CD4-positive, alpha-beta memory T cell (primary cell): ENCODE measurements at regions of chr7 and their contacts with region 1.

Region 1: GRCh38 chr7:44847508-44847920 is 373 bp downstream of the H2AZ2 start:
- DNase-seq: peak; percentile 91 to 93 (median 92)
- H3K4me3 ChIP-seq: peak overlapping the region; percentile 49 to 62
- H3K4me3 Mint-ChIP-seq: peak overlapping the region; percentile 87 to 98 (median 96)
- H3K27ac ChIP-seq: peak overlapping the region; percentile 90
- H3K27ac Mint-ChIP-seq: peak overlapping the region; percentile 97 to 100 (median 100)
- H3K4me1 ChIP-seq: peaks cover 29% of the 10 kb centered on the region
- H3K4me1 Mint-ChIP-seq: peaks cover 18 to 46% (median 25%) of the 10 kb centered on the region in 4 donors
- H3K27me3 ChIP-seq: no peaks in the 10 kb centered on the region
- H3K27me3 Mint-ChIP-seq: peaks cover 0 to 1% of the 10 kb centered on the region in 2 donors

Region 2: DNA sequence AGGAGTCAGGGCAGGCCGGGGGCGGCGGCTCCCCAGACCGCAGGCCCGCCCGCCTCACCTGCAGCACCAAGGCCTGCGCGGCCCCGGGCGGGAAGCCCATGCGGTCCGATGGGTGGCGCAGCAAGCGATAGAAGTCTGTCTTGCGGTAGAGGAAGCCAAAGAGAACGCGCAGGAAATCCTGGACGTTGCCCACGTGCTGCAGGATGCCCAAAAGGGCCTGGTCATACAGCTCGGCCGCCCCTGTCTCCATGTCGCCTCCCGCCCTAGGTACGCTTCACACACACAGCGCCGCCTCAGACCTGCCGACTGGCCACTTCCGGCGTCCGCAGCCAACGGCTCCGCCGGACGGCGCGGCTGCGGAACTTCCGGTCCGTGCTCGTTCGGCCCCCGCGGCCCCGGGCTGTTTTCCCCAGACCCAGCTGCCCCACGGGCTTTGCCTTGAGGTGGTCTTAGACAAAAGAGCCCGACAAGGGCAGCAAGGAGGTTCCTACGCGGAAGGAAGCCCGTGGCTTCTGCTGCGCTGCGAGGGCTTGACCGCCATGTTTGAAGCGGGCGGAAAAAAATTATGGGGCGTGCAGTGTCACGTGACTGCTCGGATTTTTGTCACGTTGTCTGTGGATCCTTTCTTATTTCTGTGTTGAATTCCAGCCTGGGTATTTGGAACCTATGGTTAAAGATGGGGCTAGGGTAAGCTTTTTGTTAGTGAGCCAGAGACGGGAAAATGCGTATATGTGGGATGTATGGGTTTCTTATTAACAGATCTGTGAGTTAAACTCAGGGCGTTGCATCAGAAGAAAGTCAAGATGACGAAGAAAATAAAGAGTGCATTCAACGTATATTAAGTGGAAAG is 356.9 kb before region 1 on chr7 and contains the start of gene NUDCD3:
- CTCF ChIA-PET with region 1: interaction called, 4 read pairs
- POLR2A ChIA-PET with region 1: interaction called, 15 read pairs
- intact Hi-C with region 1: loop called (anchors 1 kb)
- DNase-seq: peak; percentile 81 to 84 (median 83)
- H3K4me3 ChIP-seq: peak within 1 kb of the TSS; percentile 90 to 96
- H3K4me3 Mint-ChIP-seq: peak within 1 kb of the TSS; percentile 84 to 99 (median 93)
- H3K27ac ChIP-seq: peak within 1 kb of the TSS; percentile 93
- H3K27ac Mint-ChIP-seq: peak within 1 kb of the TSS; percentile 77 to 98 (median 96)
- H3K4me1 ChIP-seq: peaks cover 44% of the 10 kb centered on the region
- H3K4me1 Mint-ChIP-seq: peaks cover 37 to 52% (median 42%) of the 10 kb centered on the region in 4 donors
- H3K27me3 ChIP-seq: no peaks in the 10 kb centered on the region
- H3K27me3 Mint-ChIP-seq: no peaks in the 10 kb centered on the region
- total RNA-seq, gene NUDCD3: 100 to 108 TPM

Region 3: GRCh38 chr7:44587843-44588711 is 259.4 kb before region 1 on chr7:
- CTCF ChIA-PET with region 1: interaction called, 34 read pairs
- POLR2A ChIA-PET with region 1: interaction called, 50 read pairs
- intact Hi-C with region 1: loop called (anchors 1 kb)
- DNase-seq: peak; percentile 65 to 73 (median 71)
- H3K4me3 ChIP-seq: no peak overlapping the region
- H3K4me3 Mint-ChIP-seq: no peak overlapping the region
- H3K27ac ChIP-seq: no peak overlapping the region
- H3K27ac Mint-ChIP-seq: peak overlapping the region in 5 of 7 donors; percentile 42 to 86 (median 68)
- H3K4me1 ChIP-seq: peaks cover 2% of the 10 kb centered on the region
- H3K4me1 Mint-ChIP-seq: peaks cover 5 to 16% (median 9%) of the 10 kb centered on the region in 4 donors
- H3K27me3 ChIP-seq: no peaks in the 10 kb centered on the region
- H3K27me3 Mint-ChIP-seq: no peaks in the 10 kb centered on the region

Region 4: GRCh38 chr7:44700322-44700721 is 147.2 kb before region 1 on chr7:
- CTCF ChIA-PET with region 1: no interaction called
- POLR2A ChIA-PET with region 1: no interaction called
- intact Hi-C with region 1: loop called (anchors 5 kb)
- DNase-seq: no peak
- H3K4me3 ChIP-seq: no peak overlapping the region
- H3K4me3 Mint-ChIP-seq: no peak overlapping the region
- H3K27ac ChIP-seq: no peak overlapping the region
- H3K27ac Mint-ChIP-seq: peak overlapping the region in 2 of 7 donors; percentile 17 to 72
- H3K4me1 ChIP-seq: no peaks in the 10 kb centered on the region
- H3K4me1 Mint-ChIP-seq: no peaks in the 10 kb centered on the region
- H3K27me3 ChIP-seq: no peaks in the 10 kb centered on the region
- H3K27me3 Mint-ChIP-seq: no peaks in the 10 kb centered on the region

Region 5: DNA sequence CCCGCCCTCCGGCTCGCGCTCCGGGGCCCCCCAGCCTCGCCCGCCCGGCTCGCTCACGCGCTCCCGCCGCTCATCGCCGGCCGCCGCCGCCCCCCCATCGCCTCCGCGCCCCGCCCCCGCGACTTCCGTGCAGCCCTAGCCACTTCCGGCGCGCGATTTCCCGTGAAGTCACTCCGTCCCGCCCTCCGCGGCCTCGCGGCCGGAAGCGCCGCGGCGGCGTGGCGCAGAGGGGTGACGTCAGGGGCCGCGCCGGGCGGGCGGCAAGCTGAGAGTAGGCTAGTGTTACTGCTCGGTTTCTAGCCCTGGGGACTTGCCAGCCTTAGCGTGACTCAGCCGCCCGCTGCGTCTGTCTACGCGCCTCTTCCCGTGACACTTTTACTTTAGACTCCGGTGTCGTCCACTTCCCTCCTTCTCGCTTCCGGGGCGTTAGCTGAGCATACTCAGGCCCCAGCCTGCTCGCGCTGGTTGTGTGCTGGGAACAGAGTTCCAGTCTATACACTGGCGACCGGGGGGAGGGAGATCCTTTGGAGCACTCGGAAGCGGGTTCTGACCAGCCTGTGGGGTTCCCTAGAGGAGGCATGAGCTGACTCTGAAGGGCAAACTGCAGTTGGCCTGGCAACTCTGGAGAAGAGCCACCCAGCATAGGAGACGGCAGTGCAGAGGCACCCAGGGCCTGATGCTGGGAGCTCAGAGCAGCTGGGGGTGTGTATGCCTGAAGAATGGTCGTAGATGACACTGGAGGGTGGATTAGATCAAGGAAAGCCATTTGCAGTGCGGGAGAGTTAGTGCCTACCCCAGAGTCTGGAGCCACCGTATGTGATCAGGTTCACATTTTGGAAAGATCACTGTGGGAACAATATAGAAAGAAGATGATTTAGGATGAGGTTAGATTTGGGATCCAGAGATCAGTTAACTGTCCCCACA is 38.1 kb after region 1 on chr7 and contains the start of gene PURB:
- CTCF ChIA-PET with region 1: interaction called, 8 read pairs
- POLR2A ChIA-PET with region 1: interaction called, 65 read pairs
- intact Hi-C with region 1: loop called (anchors 1 kb)
- DNase-seq: peak; percentile 97 to 99 (median 98)
- H3K4me3 ChIP-seq: peak within 1 kb of the TSS; percentile 68 to 99
- H3K4me3 Mint-ChIP-seq: peak within 1 kb of the TSS; percentile 92 to 99 (median 95)
- H3K27ac ChIP-seq: peak within 1 kb of the TSS; percentile 96
- H3K27ac Mint-ChIP-seq: peak within 1 kb of the TSS; percentile 99 to 100 (median 100)
- H3K4me1 ChIP-seq: peaks cover 56% of the 10 kb centered on the region
- H3K4me1 Mint-ChIP-seq: peaks cover 24 to 67% (median 37%) of the 10 kb centered on the region in 4 donors
- H3K27me3 ChIP-seq: no peaks in the 10 kb centered on the region
- H3K27me3 Mint-ChIP-seq: no peaks in the 10 kb centered on the region
- total RNA-seq, gene PURB: 26.6 to 27.4 TPM

Region 6: GRCh38 chr7:45026984-45027773 is 179.7 kb after region 1 on chr7:
- CTCF ChIA-PET with region 1: no interaction called
- POLR2A ChIA-PET with region 1: interaction called, 11 read pairs
- intact Hi-C with region 1: no loop called
- DNase-seq: peak; percentile 65 to 76 (median 67)
- H3K4me3 ChIP-seq: peak overlapping the region; percentile 97
- H3K4me3 Mint-ChIP-seq: peak overlapping the region; percentile 88 to 98 (median 95)
- H3K27ac ChIP-seq: peak overlapping the region; percentile 82
- H3K27ac Mint-ChIP-seq: peak overlapping the region; percentile 88 to 97 (median 92)
- H3K4me1 ChIP-seq: peaks cover 73% of the 10 kb centered on the region
- H3K4me1 Mint-ChIP-seq: peaks cover 37 to 78% (median 51%) of the 10 kb centered on the region in 4 donors
- H3K27me3 ChIP-seq: no peaks in the 10 kb centered on the region
- H3K27me3 Mint-ChIP-seq: no peaks in the 10 kb centered on the region